ENCODE measurements at regions of chr15 and their contacts with region 1.

Region 1: GRCh38 chr15:45198337-45199135 is 10.8 kb upstream of the SHF start:
- DNase-seq: peak; percentile 97 to 99
- ATAC-seq: peak; percentile 61 to 84 (median 69)
- H3K4me3 ChIP-seq: peak overlapping the region; percentile 72
- H3K4me3 Mint-ChIP-seq: no peak overlapping the region
- H3K27ac ChIP-seq: peak overlapping the region; percentile 90
- H3K27ac Mint-ChIP-seq: no peak overlapping the region
- H3K4me1 ChIP-seq: peaks cover 20% of the 10 kb centered on the region
- H3K4me1 Mint-ChIP-seq: peaks cover 4 to 5% of the 10 kb centered on the region in 2 donors
- H3K27me3 ChIP-seq: no peaks in the 10 kb centered on the region
- H3K27me3 Mint-ChIP-seq: no peaks in the 10 kb centered on the region
- CTCF ChIP-seq: peak; percentile 62

Region 2: DNA sequence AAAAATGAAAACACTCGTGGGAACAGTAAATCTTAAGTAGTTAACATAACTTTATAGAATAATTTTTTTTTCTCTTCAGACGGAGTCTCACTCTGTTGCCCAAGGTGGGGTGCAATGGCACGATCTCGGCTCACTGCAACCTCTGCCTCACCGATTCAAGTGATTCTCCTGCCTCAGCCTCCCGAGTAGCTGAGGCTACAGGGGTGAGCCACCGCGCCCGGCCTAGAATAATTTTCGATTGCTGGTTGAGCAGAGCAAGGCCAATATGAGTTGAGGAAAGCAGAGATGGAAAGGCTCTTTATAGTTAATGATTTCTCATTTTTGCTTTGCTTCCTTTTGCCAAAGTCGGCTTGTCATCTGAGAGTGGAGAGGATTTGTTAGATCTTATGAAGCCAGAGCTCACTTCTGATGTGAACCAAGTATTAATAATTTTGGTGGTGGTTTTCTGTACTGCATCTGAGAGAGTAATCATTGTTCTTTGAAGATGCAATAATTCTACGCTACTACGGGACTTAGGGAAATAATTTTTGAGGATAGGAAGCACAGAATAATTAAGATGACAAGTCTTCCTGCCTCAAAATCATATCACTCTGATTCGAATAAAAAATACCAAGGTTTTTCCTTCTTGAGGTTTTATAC is 911.6 kb before region 1 on chr15:
- intact Hi-C with region 1: loop called (anchors 10 kb)
- DNase-seq: peak in 1 of 2 donors; percentile 28
- ATAC-seq: no peak
- H3K4me3 ChIP-seq: peak overlapping the region; percentile 94
- H3K4me3 Mint-ChIP-seq: peak overlapping the region; percentile 97
- H3K27ac ChIP-seq: peak overlapping the region; percentile 96
- H3K27ac Mint-ChIP-seq: peak overlapping the region; percentile 98 to 100
- H3K4me1 ChIP-seq: peaks cover 13% of the 10 kb centered on the region
- H3K4me1 Mint-ChIP-seq: peaks cover 44 to 45% of the 10 kb centered on the region in 2 donors
- H3K27me3 ChIP-seq: no peaks in the 10 kb centered on the region
- H3K27me3 Mint-ChIP-seq: peaks cover 5 to 22% of the 10 kb centered on the region in 2 donors
- CTCF ChIP-seq: peak; percentile 14

Region 3: DNA sequence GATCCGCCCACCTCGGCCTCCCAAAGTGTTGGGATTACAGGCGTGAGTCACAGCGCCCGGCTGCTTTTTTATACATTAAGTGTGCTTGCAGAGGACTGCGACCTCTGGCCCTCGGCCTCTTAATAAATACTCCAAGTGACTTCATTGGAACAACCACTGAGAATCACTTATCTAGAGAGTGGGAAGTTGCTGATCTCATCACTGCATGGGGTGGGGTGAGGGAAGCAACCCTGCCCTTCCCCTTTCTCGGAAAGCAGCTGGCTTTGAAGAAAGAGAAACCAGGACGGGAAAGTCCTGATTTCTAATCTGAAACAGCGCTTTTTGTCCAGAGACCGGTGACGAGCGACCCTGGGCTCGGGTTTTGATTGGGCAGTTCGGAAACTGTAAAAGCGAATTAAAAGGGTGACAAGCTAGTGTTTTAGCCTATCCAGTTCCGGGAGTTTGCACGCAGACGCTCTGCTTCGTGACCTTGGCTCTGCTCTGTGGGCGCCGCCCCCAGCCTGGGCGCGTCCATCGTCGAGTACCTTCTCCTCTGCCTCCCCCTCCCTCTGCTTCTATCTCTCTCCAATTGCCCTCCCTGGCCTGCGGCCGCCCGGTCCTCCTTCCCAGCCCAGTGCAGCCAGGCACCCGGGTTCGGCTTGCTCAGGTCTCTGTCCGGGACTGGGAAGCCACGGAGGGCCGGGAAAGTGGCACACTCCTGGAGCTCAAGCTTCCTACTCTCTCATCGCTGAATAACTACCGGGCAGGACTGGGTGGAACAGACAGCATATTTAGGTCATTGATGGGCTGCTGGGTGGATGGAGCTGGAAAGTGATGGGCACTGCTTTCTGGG is 469.7 kb before region 1 on chr15:
- intact Hi-C with region 1: loop called (anchors 5 kb)
- DNase-seq: peak; percentile 94 to 98
- ATAC-seq: peak; percentile 75 to 92 (median 83)
- H3K4me3 ChIP-seq: peak overlapping the region; percentile 98
- H3K4me3 Mint-ChIP-seq: peak overlapping the region; percentile 98
- H3K27ac ChIP-seq: peak overlapping the region; percentile 96
- H3K27ac Mint-ChIP-seq: peak overlapping the region; percentile 100
- H3K4me1 ChIP-seq: peaks cover 53% of the 10 kb centered on the region
- H3K4me1 Mint-ChIP-seq: peaks cover 57 to 59% of the 10 kb centered on the region in 2 donors
- H3K27me3 ChIP-seq: no peaks in the 10 kb centered on the region
- H3K27me3 Mint-ChIP-seq: no peaks in the 10 kb centered on the region
- CTCF ChIP-seq: no peak

Region 4: DNA sequence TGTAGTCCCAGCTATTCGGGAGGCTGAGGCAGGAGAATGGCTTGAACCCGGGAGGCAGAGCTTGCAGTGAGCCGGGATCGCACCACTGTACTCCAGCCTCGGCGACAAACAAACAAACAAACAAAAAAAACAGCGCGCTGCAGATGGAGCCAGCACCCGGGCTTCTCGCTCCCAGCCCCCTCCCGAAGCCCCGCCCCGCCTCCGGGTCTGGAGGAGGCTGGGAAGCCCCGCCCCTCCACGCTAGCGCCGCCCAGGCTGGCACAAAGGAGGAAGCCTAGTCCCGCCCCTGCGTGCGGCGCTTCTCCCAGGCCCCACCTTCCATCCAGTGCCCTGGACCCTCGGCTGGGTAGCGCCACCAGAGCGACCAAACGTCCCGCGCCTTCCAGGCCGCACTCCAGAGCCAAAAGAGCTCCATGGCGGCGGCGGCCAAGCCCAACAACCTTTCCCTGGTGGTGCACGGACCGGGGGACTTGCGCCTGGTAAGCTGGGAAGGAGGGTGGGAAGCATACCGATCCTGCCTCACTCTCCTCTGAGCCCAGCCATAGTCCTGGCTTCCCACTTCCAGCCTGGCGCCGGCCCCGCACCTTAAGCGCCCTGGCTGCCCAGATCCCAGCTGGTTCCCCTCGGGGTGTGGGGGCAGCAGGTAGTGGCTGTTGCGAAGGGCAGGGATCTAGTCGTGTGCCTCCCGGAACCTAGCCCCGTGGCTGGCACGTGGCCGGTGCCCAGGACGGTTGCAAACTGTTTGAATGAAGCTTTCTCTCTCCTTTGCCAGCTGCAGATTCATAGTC is 175.5 kb before region 1 on chr15 and contains the start of gene SORD:
- intact Hi-C with region 1: no loop called
- DNase-seq: peak; percentile 82 to 92
- ATAC-seq: peak; percentile 98 to 99 (median 99)
- H3K4me3 ChIP-seq: peak within 1 kb of the TSS; percentile 72
- H3K4me3 Mint-ChIP-seq: peak within 1 kb of the TSS; percentile 89
- H3K27ac ChIP-seq: no peak within 1 kb of the TSS
- H3K27ac Mint-ChIP-seq: peak within 1 kb of the TSS; percentile 51 to 78
- H3K4me1 ChIP-seq: peaks cover 19% of the 10 kb centered on the region
- H3K4me1 Mint-ChIP-seq: peaks cover 8 to 12% of the 10 kb centered on the region in 2 donors
- H3K27me3 ChIP-seq: no peaks in the 10 kb centered on the region
- H3K27me3 Mint-ChIP-seq: peaks cover 13 to 20% of the 10 kb centered on the region in 2 donors
- CTCF ChIP-seq: no peak
- total RNA-seq, gene SORD: 2.6 to 5.7 (median 2.8) TPM

Region 5: GRCh38 chr15:45187894-45188830 is 10.4 kb before region 1 on chr15 and contains the start of gene SHF:
- intact Hi-C with region 1: no loop called
- DNase-seq: peak in 1 of 2 donors; percentile 84
- ATAC-seq: peak; percentile 57 to 75 (median 69)
- H3K4me3 ChIP-seq: peak within 1 kb of the TSS; percentile 61
- H3K4me3 Mint-ChIP-seq: peak within 1 kb of the TSS; percentile 95
- H3K27ac ChIP-seq: peak within 1 kb of the TSS; percentile 24
- H3K27ac Mint-ChIP-seq: peak within 1 kb of the TSS; percentile 53 to 71
- H3K4me1 ChIP-seq: peaks cover 15% of the 10 kb centered on the region
- H3K4me1 Mint-ChIP-seq: peaks cover 14 to 25% of the 10 kb centered on the region in 2 donors
- H3K27me3 ChIP-seq: peaks cover 15% of the 10 kb centered on the region
- H3K27me3 Mint-ChIP-seq: peaks cover 26 to 34% of the 10 kb centered on the region in 2 donors
- CTCF ChIP-seq: no peak
- total RNA-seq, gene SHF: 0.94 to 2.4 (median 1.7) TPM

Region 6: DNA sequence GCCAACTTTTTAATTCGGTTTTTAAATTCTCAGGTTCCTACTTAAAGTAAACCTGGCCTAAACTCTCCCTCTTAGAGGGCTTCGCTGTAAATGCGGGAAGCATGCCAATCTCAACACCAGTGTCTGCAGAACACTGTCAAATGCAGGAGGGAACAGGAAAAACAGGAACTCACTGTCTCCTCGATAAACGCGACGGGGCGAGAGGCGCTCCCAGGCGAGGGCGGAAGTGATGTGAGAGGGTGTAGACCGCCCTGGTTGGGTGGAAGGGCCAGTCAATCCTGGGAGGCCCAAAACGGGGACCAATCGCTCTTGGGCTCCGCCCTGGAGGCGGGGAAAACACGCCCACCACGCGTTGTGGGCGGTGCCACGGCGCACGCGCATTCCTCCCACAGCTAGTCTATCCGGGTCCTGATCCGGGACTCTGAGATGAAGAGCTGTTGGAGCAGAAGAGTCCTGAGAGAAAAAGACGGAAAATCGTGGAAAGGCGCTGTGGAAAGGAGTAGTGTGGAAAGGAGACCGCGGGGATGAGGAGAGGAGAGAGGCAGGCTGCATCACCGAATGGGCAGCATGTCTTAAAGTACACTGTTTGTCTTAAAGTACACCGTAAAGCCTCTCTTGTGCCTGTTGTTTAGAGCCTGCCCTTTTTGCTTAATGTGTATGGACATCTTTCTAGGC is 80.6 kb after region 1 on chr15:
- intact Hi-C with region 1: loop called (anchors 2 kb)
- DNase-seq: peak; percentile 98 to 99
- ATAC-seq: peak; percentile 99 to 100 (median 99)
- H3K4me3 ChIP-seq: peak overlapping the region; percentile 60
- H3K4me3 Mint-ChIP-seq: peak overlapping the region; percentile 98
- H3K27ac ChIP-seq: peak overlapping the region; percentile 80
- H3K27ac Mint-ChIP-seq: peak overlapping the region; percentile 83 to 97
- H3K4me1 ChIP-seq: peaks cover 13% of the 10 kb centered on the region
- H3K4me1 Mint-ChIP-seq: peaks cover 14 to 23% of the 10 kb centered on the region in 2 donors
- H3K27me3 ChIP-seq: no peaks in the 10 kb centered on the region
- H3K27me3 Mint-ChIP-seq: peaks cover 3 to 8% of the 10 kb centered on the region in 2 donors
- CTCF ChIP-seq: no peak

Region 7: DNA sequence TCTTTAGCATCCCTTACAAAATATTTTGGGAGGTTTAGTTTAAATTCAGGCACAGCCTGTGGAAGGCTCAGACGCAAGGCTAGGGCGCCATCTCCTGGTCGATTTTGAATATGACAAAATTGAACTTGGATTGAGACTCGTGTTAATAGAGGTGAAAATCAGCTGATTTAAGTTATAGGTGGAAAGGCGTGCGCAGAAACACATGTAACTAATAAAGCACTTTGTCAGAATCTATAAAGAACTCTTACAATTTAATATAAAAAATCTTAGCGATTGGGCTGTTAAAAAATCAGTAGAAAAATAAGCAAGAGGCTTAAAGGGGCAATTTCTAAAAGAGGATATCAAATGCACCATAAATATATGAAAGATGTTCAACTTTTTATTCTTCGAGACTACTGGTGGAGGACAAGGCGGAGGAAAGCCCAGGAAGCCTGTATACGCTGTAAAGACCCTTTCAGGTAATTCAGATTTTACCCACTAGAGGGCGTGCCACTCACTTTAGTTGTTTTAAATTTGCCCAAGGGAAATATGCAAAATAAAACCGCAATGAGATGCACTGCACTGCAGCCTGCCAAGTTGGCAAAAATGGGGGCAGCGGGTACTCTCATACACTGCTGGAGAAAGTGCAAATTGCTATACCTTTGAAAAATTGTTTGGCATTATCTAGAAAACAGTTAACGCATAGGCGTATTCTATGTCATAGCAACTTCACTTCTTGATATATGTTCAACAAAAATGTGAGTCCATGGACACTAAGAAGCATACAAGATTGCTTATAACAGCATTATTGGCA is 259.3 kb after region 1 on chr15:
- intact Hi-C with region 1: loop called (anchors 2 kb)
- DNase-seq: peak; percentile 55 to 92
- ATAC-seq: peak; percentile 70 to 81 (median 76)
- H3K4me3 ChIP-seq: peak overlapping the region; percentile 36
- H3K4me3 Mint-ChIP-seq: peak overlapping the region; percentile 91
- H3K27ac ChIP-seq: peak overlapping the region; percentile 58
- H3K27ac Mint-ChIP-seq: peak overlapping the region; percentile 84 to 95
- H3K4me1 ChIP-seq: peaks cover 32% of the 10 kb centered on the region
- H3K4me1 Mint-ChIP-seq: peaks cover 21 to 26% of the 10 kb centered on the region in 2 donors
- H3K27me3 ChIP-seq: no peaks in the 10 kb centered on the region
- H3K27me3 Mint-ChIP-seq: no peaks in the 10 kb centered on the region
- CTCF ChIP-seq: peak; percentile 94